ENCODE measurements at regions of chr11 and their contacts with region 1.

Region 1: GRCh38 chr11:33736148-33736809 is at the start of gene CD59:
- DNase-seq: peak; percentile 80 to 98
- H3K4me3 ChIP-seq: peak within 1 kb of the TSS; percentile 69
- H3K27ac ChIP-seq: peak within 1 kb of the TSS; percentile 89
- H3K4me1 ChIP-seq: peaks cover 48% of the 10 kb centered on the region
- H3K27me3 ChIP-seq: no peaks in the 10 kb centered on the region
- CTCF ChIP-seq: no peak
- total RNA-seq, gene CD59: 288 and 291 TPM in 2 replicates

Region 2: GRCh38 chr11:33161120-33162005 is 574.9 kb before region 1 on chr11 and contains the start of gene CSTF3:
- CTCF ChIA-PET with region 1: no interaction called
- POLR2A ChIA-PET with region 1: no interaction called
- intact Hi-C with region 1: loop called (anchors 5 kb)
- DNase-seq: peak; percentile 97 to 100
- H3K4me3 ChIP-seq: peak within 1 kb of the TSS; percentile 76
- H3K27ac ChIP-seq: peak within 1 kb of the TSS; percentile 75
- H3K4me1 ChIP-seq: peaks cover 35% of the 10 kb centered on the region
- H3K27me3 ChIP-seq: no peaks in the 10 kb centered on the region
- CTCF ChIP-seq: peak; percentile 65
- total RNA-seq, gene CSTF3: 45.6 and 46.5 TPM in 2 replicates

Region 3: GRCh38 chr11:33475993-33476392 is 260.3 kb before region 1 on chr11:
- CTCF ChIA-PET with region 1: no interaction called
- POLR2A ChIA-PET with region 1: no interaction called
- intact Hi-C with region 1: no loop called
- DNase-seq: no peak
- H3K4me3 ChIP-seq: no peak overlapping the region
- H3K27ac ChIP-seq: no peak overlapping the region
- H3K4me1 ChIP-seq: peaks cover 12% of the 10 kb centered on the region
- H3K27me3 ChIP-seq: no peaks in the 10 kb centered on the region
- CTCF ChIP-seq: no peak

Region 4: GRCh38 chr11:33542921-33543320 is 193.4 kb before region 1 on chr11:
- CTCF ChIA-PET with region 1: no interaction called
- POLR2A ChIA-PET with region 1: no interaction called
- intact Hi-C with region 1: loop called (anchors 1 kb)
- DNase-seq: peak in 1 of 2 experiments; percentile 58
- H3K4me3 ChIP-seq: no peak overlapping the region
- H3K27ac ChIP-seq: no peak overlapping the region
- H3K4me1 ChIP-seq: no peaks in the 10 kb centered on the region
- H3K27me3 ChIP-seq: no peaks in the 10 kb centered on the region
- CTCF ChIP-seq: peak; percentile 84

Region 5: GRCh38 chr11:33633241-33633901 is 102.9 kb before region 1 on chr11:
- CTCF ChIA-PET with region 1: interaction called, 4 read pairs
- POLR2A ChIA-PET with region 1: interaction called, 4 read pairs
- intact Hi-C with region 1: loop called (anchors 5 kb)
- DNase-seq: peak; percentile 85 to 99
- H3K4me3 ChIP-seq: peak overlapping the region; percentile 4; the same call in 1 of the 2 replicates
- H3K27ac ChIP-seq: peak overlapping the region; percentile 99
- H3K4me1 ChIP-seq: peaks cover 49% of the 10 kb centered on the region
- H3K27me3 ChIP-seq: no peaks in the 10 kb centered on the region
- CTCF ChIP-seq: no peak

Region 6: GRCh38 chr11:33687733-33688479 is 48.4 kb before region 1 on chr11:
- CTCF ChIA-PET with region 1: interaction called, 5 read pairs
- POLR2A ChIA-PET with region 1: interaction called, 73 read pairs
- intact Hi-C with region 1: loop called (anchors 1 kb)
- DNase-seq: peak; percentile 61 to 87
- H3K4me3 ChIP-seq: no peak overlapping the region
- H3K27ac ChIP-seq: peak overlapping the region; percentile 99
- H3K4me1 ChIP-seq: peaks cover 56% of the 10 kb centered on the region
- H3K27me3 ChIP-seq: no peaks in the 10 kb centered on the region
- CTCF ChIP-seq: peak; percentile 97

Region 7: GRCh38 chr11:33709466-33709865 is 26.8 kb before region 1 on chr11:
- CTCF ChIA-PET with region 1: no interaction called
- POLR2A ChIA-PET with region 1: interaction called, 19 read pairs
- intact Hi-C with region 1: no loop called
- DNase-seq: peak in 1 of 2 experiments; percentile 28
- H3K4me3 ChIP-seq: no peak overlapping the region
- H3K27ac ChIP-seq: peak overlapping the region; percentile 53
- H3K4me1 ChIP-seq: peaks cover 48% of the 10 kb centered on the region
- H3K27me3 ChIP-seq: no peaks in the 10 kb centered on the region
- CTCF ChIP-seq: no peak

Region 8: DNA sequence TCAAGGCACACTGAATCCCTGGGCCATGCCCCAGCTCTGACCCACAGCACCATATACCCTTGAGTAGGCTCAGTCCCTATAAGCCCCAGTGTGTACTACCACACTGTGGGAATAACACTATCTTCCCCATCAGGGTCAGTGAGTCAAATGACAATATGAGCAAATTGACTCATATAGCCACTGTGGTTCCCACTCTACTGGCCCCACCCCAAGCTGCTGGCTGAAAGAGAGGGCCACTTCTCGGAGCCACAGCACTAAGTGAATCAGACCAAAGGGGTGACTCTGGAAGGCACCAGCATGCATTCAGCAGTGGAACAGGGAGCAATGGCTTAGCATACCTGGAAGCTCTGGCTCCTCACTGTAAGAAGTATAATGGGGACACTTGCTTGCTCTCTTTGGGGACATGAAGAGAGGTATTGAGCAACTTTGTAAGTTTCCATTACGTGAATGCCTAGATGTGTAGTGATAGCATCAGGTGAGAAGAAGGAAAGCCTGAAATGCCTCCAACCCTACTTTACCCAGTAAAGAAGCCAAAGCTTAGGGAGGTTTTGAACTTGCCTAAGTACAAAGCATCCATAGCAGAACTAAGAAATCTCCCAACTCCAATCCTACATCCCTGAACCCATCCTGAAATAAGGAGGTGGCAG is 13.6 kb before region 1 on chr11:
- CTCF ChIA-PET with region 1: interaction called, 6 read pairs
- POLR2A ChIA-PET with region 1: interaction called, 10 read pairs
- intact Hi-C with region 1: loop called (anchors 1 kb)
- DNase-seq: peak; percentile 70 to 73
- H3K4me3 ChIP-seq: no peak overlapping the region
- H3K27ac ChIP-seq: peak overlapping the region; percentile 67
- H3K4me1 ChIP-seq: peaks cover 38% of the 10 kb centered on the region
- H3K27me3 ChIP-seq: no peaks in the 10 kb centered on the region
- CTCF ChIP-seq: no peak